ENCODE measurements at regions of chr15 and their contacts with region 1.

Region 1: DNA sequence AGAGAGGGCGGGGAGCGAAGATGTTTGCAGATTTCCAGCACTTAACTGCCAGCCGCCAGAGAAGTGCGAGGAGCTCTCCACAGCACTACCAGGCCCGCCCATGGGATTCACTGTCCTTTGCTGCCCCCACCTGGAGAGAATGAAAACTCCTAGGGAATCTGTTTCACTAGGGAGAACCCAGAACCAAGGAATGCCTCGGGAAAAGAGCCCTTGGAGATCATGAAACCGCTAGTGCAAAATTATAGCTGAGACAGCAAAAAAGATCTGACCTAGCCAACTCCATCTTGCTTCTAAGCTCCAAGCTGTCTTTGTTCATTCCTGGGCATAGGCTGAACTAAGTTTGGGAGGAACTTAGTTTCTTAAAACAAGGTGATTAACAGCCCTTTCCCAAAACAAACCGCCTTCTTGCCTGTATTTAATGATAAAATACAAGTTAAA is 82.6 kb upstream of the GCNT3 start:
- DNase-seq: peak; percentile 76 to 85
- H3K4me3 ChIP-seq: no peak overlapping the region
- H3K27ac ChIP-seq: no peak overlapping the region
- H3K4me1 ChIP-seq: no peaks in the 10 kb centered on the region; the same call in 1 of the 2 replicates
- H3K27me3 ChIP-seq: no peaks in the 10 kb centered on the region
- CTCF ChIP-seq: peak; percentile 86

Region 2: GRCh38 chr15:58212909-58213526 is 1316.0 kb before region 1 on chr15:
- CTCF ChIA-PET with region 1: no interaction called
- POLR2A ChIA-PET with region 1: no interaction called
- intact Hi-C with region 1: loop called (anchors 10 kb)
- DNase-seq: no peak
- H3K4me3 ChIP-seq: no peak overlapping the region
- H3K27ac ChIP-seq: no peak overlapping the region
- H3K4me1 ChIP-seq: no peaks in the 10 kb centered on the region
- H3K27me3 ChIP-seq: no peaks in the 10 kb centered on the region
- CTCF ChIP-seq: peak; percentile 67

Region 3: GRCh38 chr15:58980351-58980939 is 548.5 kb before region 1 on chr15:
- CTCF ChIA-PET with region 1: no interaction called
- POLR2A ChIA-PET with region 1: no interaction called
- intact Hi-C with region 1: loop called (anchors 1 kb)
- DNase-seq: no peak
- H3K4me3 ChIP-seq: no peak overlapping the region
- H3K27ac ChIP-seq: no peak overlapping the region
- H3K4me1 ChIP-seq: no peaks in the 10 kb centered on the region
- H3K27me3 ChIP-seq: no peaks in the 10 kb centered on the region
- CTCF ChIP-seq: peak; percentile 61

Region 4: DNA sequence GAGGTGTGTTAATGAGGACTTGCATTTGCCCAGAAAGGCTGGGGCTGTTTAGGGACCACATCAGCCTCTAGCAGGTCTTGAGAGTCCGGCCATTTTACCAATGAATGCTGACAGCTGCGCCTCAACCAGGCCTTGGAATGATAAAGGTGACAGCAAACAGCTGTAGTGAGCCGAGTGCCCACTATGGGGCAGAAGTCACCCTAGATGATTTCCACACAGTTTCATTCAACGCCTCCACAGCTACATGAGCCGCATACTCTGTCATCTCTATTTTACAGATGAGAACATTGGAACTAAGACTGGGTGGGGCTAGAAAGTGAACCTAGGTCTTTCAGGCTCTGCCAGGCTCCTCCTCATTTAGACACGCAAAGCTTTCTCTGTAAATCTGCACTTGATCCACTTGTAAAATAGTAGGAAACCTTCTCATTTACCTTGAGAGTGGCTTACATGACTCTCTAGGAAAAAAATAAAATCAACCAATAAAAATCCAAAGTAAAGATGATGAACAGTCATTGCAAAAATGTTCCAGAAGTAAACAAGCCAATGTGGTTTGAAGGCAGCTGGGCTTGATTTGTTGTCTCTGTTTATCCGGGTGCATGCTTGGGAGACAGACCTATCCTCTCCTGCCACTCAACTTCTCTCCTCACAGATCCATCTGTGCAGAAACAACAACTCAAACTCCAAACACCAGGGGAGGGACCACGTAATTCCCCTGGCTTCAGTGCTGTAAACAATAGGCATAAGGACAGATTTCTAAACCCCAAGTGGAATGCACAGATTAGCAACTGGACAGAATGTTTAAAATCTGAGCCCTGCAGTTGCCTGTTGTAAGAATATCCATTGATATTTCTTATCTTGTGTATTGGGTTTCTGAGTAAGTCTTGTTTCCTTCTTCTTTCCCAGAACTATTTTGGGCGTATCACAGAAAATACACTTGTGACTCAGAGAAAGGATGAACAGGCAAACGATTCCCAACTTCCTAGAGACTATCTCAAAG is 353.9 kb before region 1 on chr15:
- CTCF ChIA-PET with region 1: interaction called, 10 read pairs
- POLR2A ChIA-PET with region 1: no interaction called
- intact Hi-C with region 1: no loop called
- DNase-seq: peak; percentile 24 to 40
- H3K4me3 ChIP-seq: no peak overlapping the region
- H3K27ac ChIP-seq: peak overlapping the region; percentile 70
- H3K4me1 ChIP-seq: peaks cover 20% of the 10 kb centered on the region
- H3K27me3 ChIP-seq: no peaks in the 10 kb centered on the region
- CTCF ChIP-seq: peak; percentile 55

Region 5: GRCh38 chr15:59329570-59330350 is 199.2 kb before region 1 on chr15:
- CTCF ChIA-PET with region 1: no interaction called
- POLR2A ChIA-PET with region 1: no interaction called
- intact Hi-C with region 1: no loop called
- DNase-seq: no peak
- H3K4me3 ChIP-seq: no peak overlapping the region
- H3K27ac ChIP-seq: no peak overlapping the region
- H3K4me1 ChIP-seq: no peaks in the 10 kb centered on the region
- H3K27me3 ChIP-seq: no peaks in the 10 kb centered on the region
- CTCF ChIP-seq: no peak

Region 6: DNA sequence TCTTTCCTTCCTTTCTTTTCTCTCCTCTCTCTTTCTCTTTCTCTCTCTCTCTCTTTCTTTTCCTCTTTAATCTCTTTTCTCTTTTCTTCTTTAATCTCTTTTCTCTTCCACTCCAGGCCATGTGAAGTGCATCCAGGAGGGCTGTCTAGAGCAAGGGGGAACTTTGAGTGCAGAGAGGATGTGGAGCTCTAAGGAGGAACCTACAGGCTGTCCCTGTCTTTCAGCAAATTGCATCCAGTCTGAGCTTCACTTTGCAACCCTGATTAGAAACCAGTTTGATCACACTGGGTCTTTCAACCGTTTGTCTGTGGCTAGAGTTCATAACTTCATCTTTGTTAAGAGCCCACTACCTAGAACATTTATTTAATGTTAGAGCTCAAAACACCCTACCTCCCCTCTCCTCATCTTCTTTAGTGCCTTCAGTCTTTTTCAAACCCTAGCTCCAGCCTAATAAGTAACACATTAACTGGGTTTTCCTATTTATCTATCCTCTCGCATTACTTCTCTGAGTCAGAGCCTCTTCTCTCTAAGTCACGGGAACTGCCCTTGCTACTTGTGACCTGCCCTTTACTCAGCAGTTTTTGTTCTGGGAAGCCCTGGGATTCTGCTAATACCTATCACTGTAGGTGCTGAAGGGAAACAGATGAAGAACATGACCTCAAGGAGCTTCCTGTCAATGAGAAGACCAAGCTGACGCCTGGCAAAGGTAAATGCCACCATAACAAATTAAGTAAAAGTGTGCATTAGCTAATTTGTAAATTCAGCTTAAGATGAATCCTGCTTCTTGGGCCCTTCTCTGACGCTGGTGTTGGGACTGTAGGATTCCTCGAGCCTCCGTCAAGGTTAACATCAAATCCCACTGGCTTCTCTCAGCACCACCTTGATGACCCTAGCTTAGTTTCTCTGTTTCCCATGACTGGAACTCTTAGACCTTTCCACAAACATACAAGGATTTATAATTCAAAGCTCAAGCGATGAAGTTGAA is 82.6 kb after region 1 on chr15 and contains the start of gene GCNT3:
- CTCF ChIA-PET with region 1: interaction called, 12 read pairs
- POLR2A ChIA-PET with region 1: no interaction called
- intact Hi-C with region 1: loop called (anchors 1 kb)
- DNase-seq: peak in 1 of 2 experiments; percentile 60
- H3K4me3 ChIP-seq: no peak within 1 kb of the TSS; the same call in 1 of the 2 replicates
- H3K27ac ChIP-seq: peak within 1 kb of the TSS; percentile 75
- H3K4me1 ChIP-seq: peaks cover 28% of the 10 kb centered on the region
- H3K27me3 ChIP-seq: no peaks in the 10 kb centered on the region
- CTCF ChIP-seq: no peak
- total RNA-seq, gene GCNT3: 0.52 and 0.80 TPM in 2 replicates

Region 7: DNA sequence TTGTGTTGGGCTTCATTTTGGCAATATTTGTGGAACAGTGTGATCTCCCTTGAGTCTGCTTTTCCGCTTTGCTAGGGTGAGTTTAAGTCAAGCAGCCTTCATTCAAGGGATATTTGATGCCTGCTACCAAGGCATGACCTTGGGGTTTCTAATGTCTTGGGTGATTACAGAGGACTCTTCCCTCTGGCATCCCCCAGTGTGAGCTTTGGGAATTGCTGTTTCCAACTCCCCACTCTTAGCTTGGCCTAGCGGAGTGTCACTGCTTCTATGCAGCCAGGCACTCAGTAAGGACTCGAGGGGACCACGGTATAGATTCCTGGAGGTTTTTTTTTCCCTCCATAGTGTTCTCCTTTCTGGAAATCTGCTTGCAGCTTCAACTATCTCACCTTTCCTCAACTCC is 103.7 kb after region 1 on chr15:
- CTCF ChIA-PET with region 1: interaction called, 11 read pairs
- POLR2A ChIA-PET with region 1: interaction called, 4 read pairs
- intact Hi-C with region 1: no loop called
- DNase-seq: no peak
- H3K4me3 ChIP-seq: no peak overlapping the region
- H3K27ac ChIP-seq: no peak overlapping the region
- H3K4me1 ChIP-seq: no peaks in the 10 kb centered on the region
- H3K27me3 ChIP-seq: no peaks in the 10 kb centered on the region
- CTCF ChIP-seq: no peak; the same call in 1 of the 2 replicates

Measured in PC-9 (cell line).